Dorsolateral prefrontal cortex (tissue), 120 donors: ENCODE measurements at regions of chr6 and their contacts with region 1.

Region 1: DNA sequence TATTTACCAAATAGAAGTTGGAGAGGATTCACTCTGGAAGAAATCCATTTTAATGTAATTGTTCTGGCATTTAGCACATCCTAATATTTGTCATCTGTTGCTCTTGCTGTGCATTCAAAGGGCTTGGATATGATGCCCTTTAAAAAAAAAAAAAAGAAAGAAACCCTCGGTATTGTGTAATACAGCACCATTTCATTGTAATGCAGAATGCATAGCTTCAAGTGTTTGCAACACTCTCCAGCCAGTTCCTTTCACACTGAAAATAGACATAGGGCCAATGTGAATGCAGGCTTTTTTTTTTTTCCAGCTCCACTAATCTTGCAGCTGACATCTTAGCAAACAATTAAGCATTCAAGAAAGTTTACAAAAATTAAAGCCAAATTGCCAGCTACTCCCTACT is 197.4 kb upstream of the POU3F2 start:
- DNase-seq: no peak
- H3K4me3 ChIP-seq: peak overlapping the region in 1 of 59 donors; percentile 17
- H3K27ac ChIP-seq: peak overlapping the region in 34 of 59 donors; percentile 5 to 90 (median 38)
- H3K27me3 ChIP-seq: no peaks in the 10 kb centered on the region
- CTCF ChIP-seq: no peak

Region 2: GRCh38 chr6:97294451-97294850 is 1342.5 kb before region 1 on chr6:
- intact Hi-C with region 1: loop called in 1 of 2 experiments (anchors 5 kb)
- DNase-seq: no peak
- H3K4me3 ChIP-seq: no peak overlapping the region
- H3K27ac ChIP-seq: no peak overlapping the region
- H3K27me3 ChIP-seq: peaks cover 0 to 6% (median 0%) of the 10 kb centered on the region in 45 donors
- CTCF ChIP-seq: no peak

Region 3: DNA sequence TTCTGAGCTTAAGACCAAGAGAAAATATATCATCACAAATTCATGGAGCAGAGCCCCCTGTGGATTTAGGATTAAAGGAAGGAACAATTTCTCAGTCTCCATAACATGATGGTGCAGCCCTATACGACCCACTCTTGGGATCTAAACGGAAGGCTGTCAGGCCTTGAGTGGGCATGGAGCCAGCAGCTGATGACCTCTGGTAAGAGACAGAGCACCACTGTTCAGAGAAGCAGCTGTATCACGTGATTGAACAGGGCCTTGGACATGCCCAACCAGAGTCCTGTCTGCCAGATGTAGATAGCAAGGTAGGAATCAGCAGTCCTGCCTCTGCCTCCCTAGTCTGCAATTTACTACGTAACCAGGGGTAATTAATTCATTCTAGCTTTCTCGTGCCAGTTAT is 61.9 kb before region 1 on chr6:
- intact Hi-C with region 1: loop called in 1 of 2 experiments (anchors 5 kb)
- DNase-seq: peak; percentile 11 to 89 (median 80)
- H3K4me3 ChIP-seq: peak overlapping the region in 1 of 59 donors; percentile 3
- H3K27ac ChIP-seq: peak overlapping the region in 44 of 59 donors; percentile 0 to 80 (median 48)
- H3K27me3 ChIP-seq: no peaks in the 10 kb centered on the region
- CTCF ChIP-seq: peak in 6 of 56 donors; percentile 4 to 28 (median 19)